Sigmoid colon (tissue), 7 donors: ENCODE measurements at regions of chr1 and their contacts with region 1.

Region 1: DNA sequence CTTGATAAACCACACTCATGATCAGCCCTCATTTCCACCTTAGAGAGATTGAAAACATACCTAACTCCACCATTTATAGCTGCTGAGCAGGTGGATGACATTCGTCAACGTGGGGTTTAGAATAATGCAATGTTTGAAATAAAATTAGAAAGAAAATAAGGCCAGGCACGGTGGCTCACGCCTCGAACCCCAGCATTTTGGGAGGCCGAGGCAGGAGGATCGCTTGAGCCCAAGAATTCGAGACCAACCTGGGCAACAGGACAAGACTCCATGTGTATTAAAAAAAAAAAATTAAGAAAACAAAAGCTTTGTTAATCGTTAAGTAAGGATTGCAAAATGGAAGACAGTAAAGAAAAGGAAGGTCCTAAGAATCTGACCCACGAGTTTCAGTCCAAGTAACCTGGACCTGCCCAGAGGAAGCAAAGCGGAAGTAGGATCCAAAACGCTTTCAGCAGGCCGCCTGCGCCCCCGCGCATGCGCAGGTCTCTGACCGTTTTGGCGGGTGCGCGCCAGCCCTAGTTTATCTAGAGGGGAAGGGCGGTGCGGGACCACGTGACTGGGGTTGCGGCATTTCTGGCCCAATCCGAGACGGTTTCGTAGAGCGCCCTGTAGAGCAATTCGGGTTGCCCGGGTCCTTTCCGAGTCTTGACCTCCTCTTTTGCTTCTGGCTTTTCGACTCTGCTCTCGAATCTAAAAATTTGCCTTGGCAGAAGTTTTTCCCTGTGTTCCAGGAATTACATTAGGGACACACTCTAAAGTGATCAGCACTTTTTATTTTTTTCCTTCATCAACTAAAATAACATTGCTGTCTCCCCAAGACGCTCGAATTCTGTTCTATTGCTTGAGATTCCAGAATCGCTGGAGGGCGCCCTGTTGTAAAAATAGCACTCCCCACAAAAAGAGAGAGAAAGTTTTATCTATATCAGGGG is 22.5 kb downstream of the ANP32E start:
- DNase-seq: peak; percentile 99
- H3K4me3 ChIP-seq: peak overlapping the region; percentile 26 to 51 (median 44)
- H3K27ac ChIP-seq: peak overlapping the region; percentile 82 to 86 (median 83)
- H3K4me1 ChIP-seq: peaks cover 0 to 7% (median 5%) of the 10 kb centered on the region in 4 donors
- H3K27me3 ChIP-seq: no peaks in the 10 kb centered on the region
- CTCF ChIP-seq: peak in 1 of 4 experiments; percentile 14
- EP300 ChIP-seq: no peak
- POLR2A ChIP-seq: peak; percentile 22 to 56

Region 2: DNA sequence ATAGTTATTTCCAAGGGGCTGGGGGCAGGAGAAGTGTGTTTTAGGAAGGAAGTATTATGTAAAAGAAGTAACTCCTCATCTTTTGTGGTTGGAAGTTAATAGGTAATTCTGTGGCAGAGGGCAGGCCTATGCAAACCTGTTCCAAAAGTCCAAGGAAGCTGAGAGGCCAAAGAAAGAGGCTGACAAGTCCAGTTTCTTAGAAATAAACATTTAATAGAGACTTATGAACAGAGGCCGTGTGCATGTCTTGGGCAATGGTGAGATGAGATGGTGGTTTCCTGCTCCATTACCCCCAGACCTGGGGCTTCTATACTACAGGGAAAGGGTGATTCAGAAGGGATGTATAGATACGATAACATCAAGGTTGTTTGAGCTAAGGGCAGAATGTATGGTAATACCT is 36.5 kb after region 1 on chr1:
- intact Hi-C with region 1: no loop called
- DNase-seq: no peak
- H3K4me3 ChIP-seq: no peak overlapping the region
- H3K27ac ChIP-seq: no peak overlapping the region
- H3K4me1 ChIP-seq: no peaks in the 10 kb centered on the region
- H3K27me3 ChIP-seq: no peaks in the 10 kb centered on the region
- CTCF ChIP-seq: no peak
- EP300 ChIP-seq: no peak
- POLR2A ChIP-seq: no peak

Region 3: GRCh38 chr1:150268705-150269403 is 55.4 kb after region 1 on chr1 and contains the start of gene APH1A:
- intact Hi-C with region 1: loop called (anchors 5 kb)
- DNase-seq: peak; percentile 99
- H3K4me3 ChIP-seq: peak within 1 kb of the TSS; percentile 81 to 97 (median 87)
- H3K27ac ChIP-seq: peak within 1 kb of the TSS; percentile 93 to 98 (median 96)
- H3K4me1 ChIP-seq: peaks cover 0 to 35% (median 24%) of the 10 kb centered on the region in 4 donors
- H3K27me3 ChIP-seq: no peaks in the 10 kb centered on the region
- CTCF ChIP-seq: no peak
- EP300 ChIP-seq: peak in 3 of 4 donors; percentile 16 to 44 (median 22)
- POLR2A ChIP-seq: peak; percentile 28 to 47
- total RNA-seq, gene APH1A: 44.6 to 59.2 (median 48.0) TPM